ENCODE measurements at regions of chr3 and their contacts with region 1.

Region 1: DNA sequence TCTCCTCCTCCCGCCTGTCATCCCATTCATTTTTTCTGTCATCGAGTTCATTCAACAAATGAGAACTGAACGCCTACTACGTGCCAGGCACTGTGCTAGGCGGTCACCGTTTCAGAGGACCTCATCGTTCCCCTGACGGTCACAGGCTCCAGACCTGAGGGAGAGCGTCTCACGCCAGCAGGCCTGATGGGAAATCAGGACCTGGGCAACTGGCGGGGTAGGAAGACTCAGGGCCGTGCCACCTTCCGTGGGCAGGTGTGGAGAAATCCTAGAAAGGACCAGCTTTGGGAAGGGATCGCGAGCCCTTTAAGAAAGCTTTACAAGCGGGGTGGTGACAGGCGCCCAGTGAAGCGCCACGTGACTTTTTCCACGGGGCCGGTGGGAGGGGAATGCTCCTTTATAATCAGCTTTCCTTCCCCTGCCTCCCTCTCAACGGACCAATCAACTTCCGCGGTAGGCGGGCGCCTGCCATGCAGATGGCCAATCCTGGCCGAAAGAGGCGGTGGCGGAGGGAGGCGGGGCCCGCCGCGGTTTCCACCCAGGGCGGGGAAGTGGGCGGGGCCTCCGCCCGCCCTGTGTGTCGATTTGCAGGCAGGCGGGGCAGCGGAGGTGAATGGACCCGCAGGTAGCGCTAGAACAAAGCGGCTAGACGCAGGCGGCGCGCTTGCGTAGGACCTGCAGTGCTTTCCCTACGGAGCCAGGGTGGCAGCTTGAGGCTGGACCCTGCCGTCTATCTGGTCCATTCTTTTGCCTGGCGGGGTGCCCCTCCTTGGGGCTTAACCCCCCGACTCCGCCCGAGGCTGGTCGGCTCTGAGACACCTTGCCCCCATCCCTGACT is 816 bp upstream of the DUSP7 start:
- DNase-seq: peak; percentile 100
- H3K4me3 Mint-ChIP-seq: peak overlapping the region; percentile 87
- H3K27ac Mint-ChIP-seq: peak overlapping the region; percentile 95
- H3K4me1 Mint-ChIP-seq: peaks cover 33% of the 10 kb centered on the region
- H3K27me3 Mint-ChIP-seq: no peaks in the 10 kb centered on the region

Region 2: GRCh38 chr3:51974963-51975851 is 82.0 kb before region 1 on chr3 and contains the start of gene ABHD14A:
- CTCF ChIA-PET with region 1: interaction called, 10 read pairs
- POLR2A ChIA-PET with region 1: no interaction called
- DNase-seq: peak; percentile 67
- H3K4me3 Mint-ChIP-seq: peak within 1 kb of the TSS; percentile 96
- H3K27ac Mint-ChIP-seq: peak within 1 kb of the TSS; percentile 93
- H3K4me1 Mint-ChIP-seq: peaks cover 34% of the 10 kb centered on the region
- H3K27me3 Mint-ChIP-seq: no peaks in the 10 kb centered on the region
- total RNA-seq, gene ABHD14A: 11.5 to 16.7 TPM

Region 3: DNA sequence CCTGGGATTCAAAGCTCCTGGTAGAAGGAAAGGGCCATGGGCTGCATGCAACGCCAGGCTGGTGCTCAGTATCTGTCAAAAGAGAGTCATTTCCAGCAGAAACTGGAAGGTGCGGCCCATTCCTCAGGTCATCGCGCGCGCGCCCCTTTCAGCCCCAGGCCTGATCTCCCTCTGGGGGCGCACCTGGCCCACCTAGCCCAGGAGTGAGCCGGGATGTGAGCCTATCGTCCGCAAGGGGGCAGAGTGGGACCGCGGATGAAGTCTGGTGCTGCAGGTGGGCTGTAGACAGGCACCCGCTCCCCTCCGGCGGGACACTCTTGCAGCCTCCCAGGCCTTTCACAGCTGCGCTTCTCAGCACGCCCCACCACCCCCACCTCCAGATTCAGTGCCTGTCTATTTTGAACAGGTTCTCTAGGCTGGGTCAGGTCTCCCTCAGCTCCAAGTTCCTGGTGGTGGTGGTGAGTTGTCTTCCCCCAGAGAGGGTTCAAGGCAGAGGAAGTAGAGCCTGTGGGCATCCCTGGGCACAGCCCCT is 55.7 kb before region 1 on chr3:
- CTCF ChIA-PET with region 1: interaction called, 12 read pairs
- POLR2A ChIA-PET with region 1: no interaction called
- DNase-seq: peak; percentile 87
- H3K4me3 Mint-ChIP-seq: no peak overlapping the region
- H3K27ac Mint-ChIP-seq: peak overlapping the region; percentile 50
- H3K4me1 Mint-ChIP-seq: peaks cover 26% of the 10 kb centered on the region
- H3K27me3 Mint-ChIP-seq: peaks cover 10% of the 10 kb centered on the region

Region 4: DNA sequence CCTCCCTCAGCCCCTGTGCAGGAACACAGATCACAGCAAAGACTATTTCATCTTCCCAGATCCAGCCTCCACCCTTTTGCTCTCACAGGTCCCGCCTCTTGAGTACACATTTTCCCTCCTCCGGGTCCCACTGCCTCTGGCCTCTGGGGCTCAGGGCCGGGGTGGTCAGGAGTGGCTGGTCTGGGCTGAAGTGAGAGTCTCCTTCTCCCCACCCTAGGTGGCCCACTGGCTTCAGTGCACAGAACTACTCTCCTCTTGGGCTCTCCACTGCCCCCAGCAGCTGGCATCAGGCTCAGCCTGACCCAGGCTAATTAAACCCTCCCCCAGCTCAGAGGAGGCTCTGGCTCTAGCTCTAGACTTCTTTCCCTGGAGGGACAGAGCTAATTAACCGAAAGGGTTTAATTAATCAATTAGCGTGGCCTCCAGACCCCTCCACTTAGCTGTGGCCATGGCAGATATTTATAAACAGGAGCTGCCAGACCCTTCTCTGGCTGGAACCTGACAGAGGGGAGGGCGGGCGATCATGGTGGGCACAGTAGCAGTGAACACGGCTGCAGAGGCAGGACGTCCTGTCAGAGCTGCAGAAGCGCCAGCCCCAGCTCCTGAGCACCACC is 16.0 kb before region 1 on chr3:
- CTCF ChIA-PET with region 1: interaction called, 13 read pairs
- POLR2A ChIA-PET with region 1: no interaction called
- DNase-seq: no peak
- H3K4me3 Mint-ChIP-seq: no peak overlapping the region
- H3K27ac Mint-ChIP-seq: peak overlapping the region; percentile 21
- H3K4me1 Mint-ChIP-seq: peaks cover 4% of the 10 kb centered on the region
- H3K27me3 Mint-ChIP-seq: no peaks in the 10 kb centered on the region

Measured in activated CD4-positive, alpha-beta T cell treated with anti-CD3 and anti-CD28 coated beads, Interleukin-2, amount 10 ng/mL, durations not matched to agents 7 days and 5 days (primary cell).